CD4-positive, alpha-beta T cell (primary cell): ENCODE measurements at regions of chr19 and their contacts with region 1.

Region 1: DNA sequence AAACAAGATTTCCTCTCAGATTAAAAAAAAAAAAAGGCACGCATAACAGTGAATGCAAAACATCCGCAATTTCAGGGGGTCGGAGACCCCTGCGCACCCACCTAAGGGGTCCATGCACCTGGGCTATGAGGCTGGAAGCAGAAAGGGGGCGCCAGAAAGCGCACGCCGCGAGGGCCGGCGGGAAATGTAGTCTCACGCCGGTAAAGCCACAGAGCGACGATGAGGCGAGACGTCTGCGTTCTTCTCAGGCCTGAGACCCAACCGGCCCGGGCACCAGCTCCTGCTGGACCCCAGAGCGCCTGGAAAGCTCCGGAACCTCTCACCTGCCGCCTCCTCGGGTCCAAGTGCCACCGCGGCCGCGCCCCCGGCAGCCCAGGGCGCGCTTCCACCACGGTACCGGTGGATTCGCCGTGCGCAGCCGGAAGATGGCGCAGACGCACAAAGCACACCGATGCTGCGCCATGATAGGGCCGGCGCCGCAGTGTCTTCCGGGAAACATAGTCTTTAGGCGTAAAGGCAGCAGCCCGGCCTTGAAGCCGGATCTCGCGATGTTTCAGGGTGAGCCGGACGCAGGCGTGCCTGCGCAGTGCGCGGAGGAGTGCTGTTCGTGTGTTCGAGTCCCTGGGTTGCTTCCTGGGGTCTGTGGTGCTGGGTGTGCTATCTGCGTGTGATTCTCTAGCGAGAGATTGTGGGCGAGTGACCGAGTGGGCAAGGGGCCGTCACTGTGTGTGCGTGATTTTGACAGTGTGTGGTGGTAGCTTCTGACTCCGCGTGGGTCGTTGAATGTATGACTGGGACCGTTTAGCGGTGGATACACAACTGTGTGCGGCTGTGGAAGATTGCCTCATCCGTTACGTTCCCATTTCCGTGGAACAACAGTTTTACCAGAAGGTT is at the start of gene ZNF582:
- DNase-seq: peak; percentile 83 to 97 (median 89)
- ATAC-seq: peak; percentile 97
- H3K4me3 ChIP-seq: peak within 1 kb of the TSS; percentile 66
- H3K4me3 Mint-ChIP-seq: peak within 1 kb of the TSS; percentile 97
- H3K27ac ChIP-seq: peak within 1 kb of the TSS; percentile 92 to 93
- H3K27ac Mint-ChIP-seq: peak within 1 kb of the TSS; percentile 78
- H3K4me1 ChIP-seq: peaks cover 10% of the 10 kb centered on the region
- H3K4me1 Mint-ChIP-seq: peaks cover 6% of the 10 kb centered on the region
- H3K27me3 ChIP-seq: no peaks in the 10 kb centered on the region
- H3K27me3 Mint-ChIP-seq: no peaks in the 10 kb centered on the region
- CTCF ChIP-seq: peak; percentile 80
- total RNA-seq, gene ZNF582: 1.5 to 1.8 TPM

Region 2: GRCh38 chr19:56403764-56404704 is 10.7 kb after region 1 on chr19 and contains the start of gene ZNF583:
- CTCF ChIA-PET with region 1: interaction called, 5 read pairs
- POLR2A ChIA-PET with region 1: interaction called, 23 read pairs
- intact Hi-C with region 1: loop called (anchors 1 kb)
- DNase-seq: peak; percentile 79 to 95 (median 88)
- ATAC-seq: peak; percentile 84
- H3K4me3 ChIP-seq: peak within 1 kb of the TSS; percentile 82
- H3K4me3 Mint-ChIP-seq: peak within 1 kb of the TSS; percentile 99
- H3K27ac ChIP-seq: peak within 1 kb of the TSS; percentile 88 to 96
- H3K27ac Mint-ChIP-seq: peak within 1 kb of the TSS; percentile 95
- H3K4me1 ChIP-seq: peaks cover 22% of the 10 kb centered on the region
- H3K4me1 Mint-ChIP-seq: peaks cover 32% of the 10 kb centered on the region
- H3K27me3 ChIP-seq: no peaks in the 10 kb centered on the region
- H3K27me3 Mint-ChIP-seq: no peaks in the 10 kb centered on the region
- CTCF ChIP-seq: no peak
- total RNA-seq, gene ZNF583: 0.95 to 1.5 TPM

Region 3: GRCh38 chr19:56507446-56508289 is 114.3 kb after region 1 on chr19 and contains the start of gene ZNF471:
- CTCF ChIA-PET with region 1: no interaction called
- POLR2A ChIA-PET with region 1: no interaction called
- intact Hi-C with region 1: loop called in 1 of 2 experiments (anchors 5 kb)
- DNase-seq: peak; percentile 65 to 95 (median 76)
- ATAC-seq: peak; percentile 98
- H3K4me3 ChIP-seq: peak within 1 kb of the TSS; percentile 42
- H3K4me3 Mint-ChIP-seq: no peak within 1 kb of the TSS
- H3K27ac ChIP-seq: peak within 1 kb of the TSS in 1 of 2 donors; percentile 77
- H3K27ac Mint-ChIP-seq: no peak within 1 kb of the TSS
- H3K4me1 ChIP-seq: peaks cover 11% of the 10 kb centered on the region
- H3K4me1 Mint-ChIP-seq: no peaks in the 10 kb centered on the region
- H3K27me3 ChIP-seq: peaks cover 9 to 25% of the 10 kb centered on the region in 2 experiments
- H3K27me3 Mint-ChIP-seq: no peaks in the 10 kb centered on the region
- CTCF ChIP-seq: no peak
- total RNA-seq, gene ZNF471: 2.2 to 2.5 TPM

Region 4: DNA sequence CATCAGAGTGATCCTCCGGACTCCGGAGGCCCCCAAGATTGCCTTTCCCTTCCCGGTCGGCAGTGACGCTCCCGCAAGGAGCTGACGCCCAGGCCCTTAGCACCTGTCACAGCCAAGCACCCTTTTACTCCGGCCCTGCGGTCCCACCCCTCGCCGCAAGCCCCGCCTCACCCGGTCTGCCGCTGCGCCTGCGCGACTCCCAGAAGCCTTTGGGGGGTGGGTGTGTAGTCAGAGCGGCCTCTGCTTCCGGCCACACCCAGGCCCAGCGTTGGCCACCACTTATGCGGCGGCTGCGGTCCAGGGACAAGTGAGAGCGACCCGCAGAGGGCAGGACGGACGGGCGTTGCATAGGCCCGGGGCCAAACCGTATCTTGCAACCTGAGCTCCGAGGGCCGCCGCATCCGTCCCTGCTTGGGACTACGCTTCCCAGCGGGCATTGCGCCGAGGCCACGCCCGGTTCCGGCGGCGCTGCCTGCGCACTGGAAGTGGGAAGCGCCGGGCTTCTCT is 144.9 kb after region 1 on chr19:
- CTCF ChIA-PET with region 1: interaction called, 3 read pairs
- POLR2A ChIA-PET with region 1: no interaction called
- intact Hi-C with region 1: loop called in 1 of 2 experiments (anchors 2 kb)
- DNase-seq: peak; percentile 80 to 90 (median 88)
- ATAC-seq: peak; percentile 92
- H3K4me3 ChIP-seq: peak overlapping the region; percentile 66
- H3K4me3 Mint-ChIP-seq: peak overlapping the region; percentile 99
- H3K27ac ChIP-seq: peak overlapping the region; percentile 75 to 82
- H3K27ac Mint-ChIP-seq: peak overlapping the region; percentile 96
- H3K4me1 ChIP-seq: peaks cover 17% of the 10 kb centered on the region
- H3K4me1 Mint-ChIP-seq: peaks cover 34% of the 10 kb centered on the region
- H3K27me3 ChIP-seq: no peaks in the 10 kb centered on the region
- H3K27me3 Mint-ChIP-seq: no peaks in the 10 kb centered on the region
- CTCF ChIP-seq: no peak

Region 5: DNA sequence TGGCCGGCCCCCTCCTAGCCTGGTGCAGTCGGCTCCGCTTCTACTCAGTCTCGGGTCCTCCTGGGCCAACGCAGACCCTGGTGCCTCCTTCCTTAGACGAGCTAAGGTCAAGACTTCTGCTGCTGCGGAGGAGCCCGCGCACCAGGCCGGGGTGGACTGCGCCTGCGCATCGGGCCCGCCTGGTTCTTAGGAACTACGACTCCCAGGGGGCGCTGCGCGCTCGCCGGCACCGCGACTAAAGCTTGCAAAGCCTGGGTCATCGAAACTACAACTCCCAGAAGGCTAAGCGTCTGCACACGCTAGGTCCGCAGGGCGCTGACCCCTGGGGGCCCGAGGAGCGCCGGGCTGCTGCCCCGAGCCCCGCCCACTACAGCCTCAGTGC is 278.2 kb after region 1 on chr19 and contains the start of gene ZNF835:
- CTCF ChIA-PET with region 1: no interaction called
- POLR2A ChIA-PET with region 1: no interaction called
- intact Hi-C with region 1: loop called (anchors 5 kb)
- DNase-seq: peak; percentile 60 to 87 (median 77)
- ATAC-seq: peak; percentile 92
- H3K4me3 ChIP-seq: peak within 1 kb of the TSS; percentile 50
- H3K4me3 Mint-ChIP-seq: peak within 1 kb of the TSS; percentile 87
- H3K27ac ChIP-seq: peak within 1 kb of the TSS in 1 of 2 donors; percentile 25
- H3K27ac Mint-ChIP-seq: peak within 1 kb of the TSS; percentile 65
- H3K4me1 ChIP-seq: peaks cover 15% of the 10 kb centered on the region
- H3K4me1 Mint-ChIP-seq: peaks cover 14% of the 10 kb centered on the region
- H3K27me3 ChIP-seq: no peaks in the 10 kb centered on the region
- H3K27me3 Mint-ChIP-seq: no peaks in the 10 kb centered on the region
- CTCF ChIP-seq: no peak
- total RNA-seq, gene ZNF835: 0.82 to 1.1 TPM

Region 6: GRCh38 chr19:57279418-57280066 is 886.2 kb after region 1 on chr19:
- CTCF ChIA-PET with region 1: no interaction called
- POLR2A ChIA-PET with region 1: no interaction called
- intact Hi-C with region 1: loop called in 1 of 2 experiments (anchors 1 kb)
- DNase-seq: peak; percentile 59 to 93 (median 70)
- ATAC-seq: peak; percentile 66
- H3K4me3 ChIP-seq: peak overlapping the region; percentile 76
- H3K4me3 Mint-ChIP-seq: no peak overlapping the region
- H3K27ac ChIP-seq: peak overlapping the region; percentile 95 to 100
- H3K27ac Mint-ChIP-seq: no peak overlapping the region
- H3K4me1 ChIP-seq: peaks cover 42% of the 10 kb centered on the region
- H3K4me1 Mint-ChIP-seq: peaks cover 27% of the 10 kb centered on the region
- H3K27me3 ChIP-seq: no peaks in the 10 kb centered on the region
- H3K27me3 Mint-ChIP-seq: no peaks in the 10 kb centered on the region
- CTCF ChIP-seq: no peak

Region 7: DNA sequence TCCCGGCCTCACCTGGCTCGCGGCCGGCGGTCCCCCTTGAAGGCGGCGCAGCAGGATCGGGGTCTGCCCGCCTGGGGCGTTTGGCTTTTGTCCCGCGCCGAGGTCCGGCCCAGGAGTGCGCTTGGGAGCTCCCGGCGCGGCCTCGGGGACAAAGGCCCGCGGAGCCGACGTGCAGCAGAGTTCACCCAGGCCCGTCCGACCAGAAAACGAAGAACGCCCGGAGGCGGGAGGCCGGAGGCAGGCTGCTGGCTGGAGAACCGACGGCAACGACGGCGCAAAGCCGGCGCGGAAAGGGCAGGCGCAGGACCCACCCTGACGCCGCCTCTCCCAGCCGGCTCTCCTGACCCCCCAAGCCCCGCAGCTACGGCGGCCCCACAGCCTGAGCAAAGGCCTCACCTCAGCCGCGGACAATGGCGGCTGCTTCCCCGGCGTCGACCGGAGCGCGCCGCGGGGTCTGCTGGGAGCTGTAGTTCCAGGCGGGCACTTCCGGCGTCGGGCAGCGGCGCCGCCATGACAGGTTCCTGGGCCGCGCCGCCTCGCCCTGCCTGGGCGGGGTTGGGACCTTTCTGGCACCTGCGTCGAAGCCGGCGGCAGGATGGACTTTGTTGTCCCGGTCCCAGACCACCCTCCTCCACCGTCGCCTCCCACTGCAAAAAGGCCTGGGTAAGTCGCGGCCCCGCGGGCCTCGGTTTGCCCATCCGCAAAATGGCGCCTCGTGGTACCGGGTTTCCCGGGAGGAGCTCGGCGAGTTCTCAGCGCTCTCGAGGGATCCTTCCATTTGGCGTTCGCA is 1609.2 kb after region 1 on chr19 and contains the start of gene ZNF606:
- CTCF ChIA-PET with region 1: no interaction called
- POLR2A ChIA-PET with region 1: no interaction called
- intact Hi-C with region 1: loop called in 1 of 2 experiments (anchors 10 kb)
- DNase-seq: peak; percentile 69 to 93 (median 81)
- ATAC-seq: peak; percentile 96
- H3K4me3 ChIP-seq: peak within 1 kb of the TSS; percentile 95
- H3K4me3 Mint-ChIP-seq: peak within 1 kb of the TSS; percentile 90
- H3K27ac ChIP-seq: peak within 1 kb of the TSS; percentile 71 to 87
- H3K27ac Mint-ChIP-seq: peak within 1 kb of the TSS; percentile 93
- H3K4me1 ChIP-seq: peaks cover 24% of the 10 kb centered on the region
- H3K4me1 Mint-ChIP-seq: peaks cover 23% of the 10 kb centered on the region
- H3K27me3 ChIP-seq: no peaks in the 10 kb centered on the region
- H3K27me3 Mint-ChIP-seq: no peaks in the 10 kb centered on the region
- CTCF ChIP-seq: no peak
- total RNA-seq, gene ZNF606: 11.1 to 13.6 TPM